HEK293T (cell line): ENCODE measurements at regions of chr17 and their contacts with region 1.

Region 1: DNA sequence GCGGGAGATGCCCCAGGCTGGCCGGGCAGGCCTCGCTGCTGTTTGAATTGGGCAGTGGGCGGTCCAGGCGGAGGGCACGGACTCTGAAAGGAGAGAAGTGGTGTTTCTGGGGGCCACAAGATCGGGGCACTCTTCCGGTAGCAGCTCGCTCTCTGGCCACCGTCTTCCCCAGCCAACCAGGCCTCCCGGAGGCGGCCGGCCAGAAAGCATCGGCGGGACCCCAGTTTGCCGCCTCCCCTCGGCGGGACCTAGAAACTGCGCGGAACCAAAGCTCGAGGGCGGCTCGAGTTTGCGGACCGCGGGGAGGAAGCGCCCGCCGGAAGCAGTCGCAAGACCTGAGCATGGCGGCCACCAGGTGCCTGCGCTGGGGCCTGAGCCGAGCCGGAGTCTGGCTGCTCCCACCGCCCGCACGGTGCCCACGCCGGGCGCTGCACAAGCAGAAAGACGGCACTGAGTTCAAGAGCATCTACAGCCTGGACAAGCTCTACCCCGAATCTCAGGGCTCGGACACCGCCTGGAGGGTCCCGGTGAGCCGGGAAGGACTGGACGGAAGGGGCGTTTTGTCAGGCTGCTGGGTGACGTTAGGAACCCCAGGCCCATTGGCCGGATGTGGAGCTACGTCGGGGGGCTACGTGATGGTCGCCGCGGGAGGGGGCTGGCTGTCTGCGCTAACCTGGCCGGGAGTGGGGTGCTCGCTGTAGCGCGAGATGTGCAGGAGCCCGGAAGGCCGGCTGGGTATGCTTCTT is at the start of gene MRPL58:
- DNase-seq: peak; percentile 90

Region 2: DNA sequence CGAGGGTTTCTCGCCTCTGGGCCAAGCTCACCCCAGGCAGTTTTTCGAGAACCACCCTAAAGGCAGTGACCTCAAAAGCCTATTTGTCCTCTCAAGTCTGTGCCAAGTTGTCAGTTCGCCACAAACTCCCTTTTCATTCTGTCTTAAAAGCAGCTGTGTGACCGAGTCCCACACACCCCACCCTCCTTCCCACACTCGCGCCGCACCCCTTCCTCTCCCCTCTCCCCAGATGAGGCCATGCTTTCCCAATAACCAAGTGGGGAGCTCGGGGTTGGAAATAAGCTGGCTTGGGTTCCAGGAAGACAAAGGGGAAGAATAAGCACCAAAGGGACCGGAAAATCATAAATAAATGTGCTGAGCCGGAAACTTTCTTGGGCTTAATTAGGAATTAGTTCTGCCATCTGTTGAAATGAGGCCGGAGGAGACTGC is 189.6 kb before region 1 on chr17:
- CTCF ChIA-PET with region 1: no interaction called
- POLR2A ChIA-PET with region 1: no interaction called
- DNase-seq: no peak

Region 3: GRCh38 chr17:74961657-74962490 is 50.6 kb before region 1 on chr17:
- CTCF ChIA-PET with region 1: interaction called, 60 read pairs
- POLR2A ChIA-PET with region 1: interaction called, 66 read pairs
- DNase-seq: peak; percentile 90

Region 4: DNA sequence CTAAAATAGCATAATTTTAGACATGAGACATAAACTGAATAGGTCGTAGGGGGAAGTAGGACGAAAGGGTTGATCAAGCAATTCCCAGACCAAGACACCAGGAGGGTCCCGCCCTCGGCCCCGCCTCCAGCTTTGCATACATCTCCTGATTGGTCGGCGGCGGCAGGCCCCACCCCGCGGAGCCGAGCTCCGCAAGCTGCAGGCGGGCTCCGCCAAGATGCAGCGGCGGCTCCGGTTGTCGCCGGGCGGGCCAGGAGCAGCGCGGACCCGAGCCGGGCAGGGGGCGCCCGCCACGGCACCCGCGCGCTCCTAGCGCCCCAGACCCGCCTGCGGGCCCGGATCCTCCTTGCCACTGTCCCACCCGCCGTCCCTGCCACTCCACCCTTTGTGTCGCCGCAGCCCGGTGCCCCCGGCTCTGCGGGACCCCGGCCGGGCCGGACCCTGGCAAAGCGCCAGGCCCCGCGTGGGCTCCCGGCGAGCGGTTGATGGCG is 25.1 kb before region 1 on chr17 and contains the start of gene CDR2L:
- CTCF ChIA-PET with region 1: interaction called, 4 read pairs
- POLR2A ChIA-PET with region 1: interaction called, 169 read pairs
- DNase-seq: peak; percentile 97

Region 5: DNA sequence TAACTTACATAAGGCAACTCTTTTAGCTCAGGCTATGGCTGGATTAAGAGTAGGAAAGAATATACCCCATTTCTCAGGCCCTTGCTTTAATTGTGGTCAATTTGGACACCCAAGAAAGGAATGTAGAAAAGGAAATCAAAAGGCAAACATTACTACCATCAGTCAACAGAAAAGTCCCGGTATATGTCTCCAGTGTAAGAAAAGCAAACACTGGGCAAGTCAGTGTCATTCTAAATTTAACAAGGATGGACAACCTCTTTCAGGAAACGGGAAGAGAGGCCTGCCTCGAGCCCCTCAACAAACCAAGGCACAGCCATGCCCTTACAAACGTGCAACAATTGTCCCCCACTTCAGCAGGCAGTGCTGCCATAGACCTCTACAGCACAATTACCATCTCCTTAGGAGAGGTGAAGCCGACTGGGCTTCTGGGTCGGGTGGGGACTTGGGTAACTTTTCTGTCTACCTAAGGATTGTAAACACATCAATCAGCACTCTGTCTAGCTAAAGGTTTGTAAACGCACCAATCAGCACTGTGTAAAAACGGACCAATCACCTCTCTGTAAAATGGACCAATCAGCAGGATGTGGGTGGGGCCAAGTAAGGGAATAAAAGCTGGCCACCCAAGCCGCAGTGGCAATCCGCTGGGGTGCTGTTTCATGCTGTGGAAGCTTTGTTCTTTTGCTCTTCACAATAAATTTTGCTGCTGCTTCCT is 12.3 kb after region 1 on chr17:
- CTCF ChIA-PET with region 1: interaction called, 3 read pairs
- POLR2A ChIA-PET with region 1: interaction called, 53 read pairs
- DNase-seq: no peak

Region 6: GRCh38 chr17:75109407-75110233 is 97.1 kb after region 1 on chr17 and contains the start of gene ARMC7:
- CTCF ChIA-PET with region 1: interaction called, 6 read pairs
- POLR2A ChIA-PET with region 1: interaction called, 18 read pairs
- DNase-seq: peak; percentile 95